Pancreas (tissue), 10 donors: ENCODE measurements at regions of chr3 and their contacts with region 1.

Region 1: DNA sequence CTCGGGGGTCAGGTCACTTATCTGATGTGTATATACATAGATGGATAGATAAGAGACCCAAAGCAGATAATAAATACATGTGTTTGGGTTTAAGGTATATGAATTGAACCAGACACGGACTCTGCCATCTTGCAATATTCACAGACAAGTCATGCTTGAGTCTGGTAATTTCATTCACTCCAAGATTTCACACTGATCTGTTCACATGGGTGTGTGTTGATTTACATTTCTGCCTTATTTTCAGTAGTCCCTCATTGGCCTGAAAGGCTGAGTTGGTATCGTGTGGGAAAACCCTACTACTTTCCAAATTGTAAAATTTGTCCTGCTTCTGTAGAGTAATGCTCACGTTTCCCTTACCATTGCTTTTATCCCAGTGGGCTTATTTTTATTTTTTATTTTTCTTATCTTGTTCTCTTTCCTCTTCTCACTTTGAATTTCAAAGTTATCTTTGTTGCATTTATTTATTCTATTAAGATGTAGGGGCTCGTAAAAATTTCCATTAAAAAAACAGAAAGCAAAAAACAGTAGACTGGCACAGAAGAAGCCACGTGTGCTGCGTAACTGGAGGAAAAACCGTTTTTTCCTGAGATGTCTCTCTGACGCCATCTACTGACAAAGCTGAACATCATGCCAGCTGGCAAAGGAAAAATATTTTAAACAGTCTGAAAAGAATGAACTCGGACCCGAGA is 10.8 kb upstream of the MFSD1 start:
- DNase-seq: peak in 1 of 6 donors; percentile 23
- ATAC-seq: peak in 3 of 4 donors; percentile 84 to 90 (median 88)
- H3K4me3 ChIP-seq: peak overlapping the region in 1 of 4 donors; percentile 19
- H3K27ac ChIP-seq: no peak overlapping the region
- H3K4me1 ChIP-seq: peaks cover 0 to 4% (median 0%) of the 10 kb centered on the region in 3 donors
- H3K27me3 ChIP-seq: no peaks in the 10 kb centered on the region
- CTCF ChIP-seq: peak in 3 of 4 donors; percentile 45 to 58 (median 52)

Region 2: DNA sequence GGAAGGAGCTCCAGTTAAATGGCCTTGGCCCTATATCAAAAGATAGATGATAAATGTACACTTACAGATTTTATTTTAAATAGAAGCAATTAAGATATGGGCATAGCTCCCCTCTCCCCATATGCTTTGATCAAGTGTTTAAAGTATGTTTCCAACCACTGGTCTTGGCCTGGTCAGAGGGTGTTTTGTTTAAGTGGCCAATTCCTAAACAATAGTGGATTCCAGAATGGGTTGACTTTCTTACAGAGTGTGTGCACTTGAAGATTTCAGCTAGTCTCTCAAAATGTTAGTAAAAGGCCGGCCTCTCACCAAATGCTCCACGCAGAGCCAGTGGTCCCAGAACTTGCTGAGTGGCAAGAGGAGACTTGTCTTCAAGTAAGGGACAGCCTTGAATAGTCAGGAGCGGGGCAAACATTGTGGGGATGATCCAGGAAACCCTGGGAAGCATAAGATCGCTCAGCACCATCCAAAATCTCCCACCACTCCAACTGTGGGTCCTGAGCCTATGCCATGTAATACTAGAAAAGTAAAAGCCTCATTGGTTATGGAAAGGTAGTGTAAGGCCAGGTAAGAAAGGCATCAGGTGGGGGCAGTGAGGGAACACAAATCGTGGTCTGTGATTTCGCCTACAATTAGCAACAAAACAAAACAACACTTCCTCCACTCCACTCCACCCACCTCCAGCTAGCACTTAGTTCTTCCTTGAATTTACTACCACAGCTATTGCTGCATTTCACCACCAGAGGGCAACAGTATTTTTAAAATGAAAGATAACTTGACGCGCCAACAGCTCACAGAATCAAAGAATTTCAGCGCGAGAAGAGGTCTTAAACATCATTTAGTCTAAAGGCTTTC is 63.6 kb before region 1 on chr3:
- intact Hi-C with region 1: loop called in 2 of 3 experiments (anchors 5 to 10 kb)
- DNase-seq: peak in 3 of 6 donors; percentile 35 to 56 (median 43)
- ATAC-seq: peak; percentile 50 to 77 (median 56)
- H3K4me3 ChIP-seq: peak overlapping the region in 1 of 4 donors; percentile 17
- H3K27ac ChIP-seq: no peak overlapping the region
- H3K4me1 ChIP-seq: peaks cover 0 to 6% (median 3%) of the 10 kb centered on the region in 3 donors
- H3K27me3 ChIP-seq: no peaks in the 10 kb centered on the region
- CTCF ChIP-seq: peak; percentile 49 to 85 (median 74)